Activated CD8-positive, alpha-beta T cell treated with anti-CD3 and anti-CD28 coated beads for 36 hours (primary cell): ENCODE measurements at regions of chr2 and their contacts with region 1.

Region 1: DNA sequence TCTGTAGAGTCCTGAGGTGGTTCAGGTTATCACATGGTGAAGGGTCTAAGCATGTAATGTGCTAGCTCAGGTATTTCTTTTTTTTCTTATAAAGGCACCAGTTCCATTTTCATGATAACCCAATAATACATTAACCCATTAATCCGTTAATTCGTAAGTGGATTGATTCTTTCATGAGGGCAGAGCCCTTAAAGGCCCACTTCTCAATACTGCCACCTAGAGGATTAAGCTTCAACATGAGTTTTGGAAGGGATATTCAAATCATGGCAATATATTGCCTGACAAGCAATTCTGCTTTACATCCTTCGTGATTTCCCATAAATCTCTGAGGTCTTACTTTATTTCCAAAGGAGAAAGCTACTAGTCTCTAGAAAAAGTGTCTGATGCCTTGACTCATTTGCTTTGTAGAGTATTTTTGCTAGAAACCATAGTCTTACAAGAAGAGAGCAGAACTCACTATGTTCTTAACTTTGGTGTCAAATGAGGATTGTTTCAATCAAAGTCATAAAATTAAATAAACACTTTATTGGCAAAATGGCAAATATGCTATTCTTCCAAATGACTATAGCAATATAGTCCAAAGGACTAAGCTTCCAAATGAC is 271.3 kb downstream of the KCNS3 start:
- DNase-seq: no peak
- ATAC-seq: no peak
- H3K4me3 Mint-ChIP-seq: no peak overlapping the region
- H3K27ac Mint-ChIP-seq: no peak overlapping the region
- H3K4me1 Mint-ChIP-seq: no peaks in the 10 kb centered on the region
- H3K27me3 Mint-ChIP-seq: peaks cover 6% of the 10 kb centered on the region
- CTCF ChIP-seq: peak; percentile 69

Region 2: DNA sequence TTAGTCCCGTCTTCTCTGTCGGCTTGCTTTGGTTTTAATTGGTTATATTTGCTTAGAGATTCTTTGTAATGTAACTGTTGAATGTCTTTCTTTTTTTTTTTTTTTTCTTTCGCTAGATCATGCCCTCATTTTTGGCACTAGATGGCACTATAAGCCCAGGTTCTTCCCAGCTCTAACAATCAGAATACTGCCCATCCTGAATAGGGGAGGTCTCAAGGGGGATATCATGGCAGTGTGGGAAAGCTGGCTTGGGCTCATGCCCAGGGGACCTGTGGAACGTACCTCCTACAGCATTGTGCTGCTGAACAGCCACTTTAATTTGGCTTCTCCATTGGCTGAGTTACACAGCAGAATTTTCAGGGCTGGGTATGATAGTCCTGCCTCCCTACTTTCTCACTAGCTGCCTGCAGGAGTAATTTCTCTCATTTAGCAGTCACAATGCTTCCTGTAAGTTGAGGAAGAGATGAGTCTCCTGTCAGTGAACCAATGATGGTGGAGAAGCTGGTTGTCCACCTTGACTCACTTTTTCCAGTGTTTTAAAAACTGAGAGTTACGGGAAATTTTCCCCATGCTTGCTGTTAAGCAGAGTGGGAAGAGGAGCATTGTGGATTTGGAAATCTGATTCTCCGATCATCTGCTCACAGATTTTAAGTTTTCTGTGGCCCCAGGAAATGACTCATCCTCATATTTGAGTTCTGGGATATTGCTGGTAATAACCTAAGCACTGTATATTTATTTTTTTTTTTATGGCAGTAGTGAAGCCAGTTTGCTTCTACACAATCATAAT is 678.7 kb before region 1 on chr2:
- CTCF ChIA-PET with region 1: no interaction called
- POLR2A ChIA-PET with region 1: no interaction called
- intact Hi-C with region 1: no loop called
- DNase-seq: peak; percentile 1
- ATAC-seq: no peak
- H3K4me3 Mint-ChIP-seq: no peak overlapping the region
- H3K27ac Mint-ChIP-seq: no peak overlapping the region
- H3K4me1 Mint-ChIP-seq: no peaks in the 10 kb centered on the region
- H3K27me3 Mint-ChIP-seq: no peaks in the 10 kb centered on the region
- CTCF ChIP-seq: no peak

Region 3: DNA sequence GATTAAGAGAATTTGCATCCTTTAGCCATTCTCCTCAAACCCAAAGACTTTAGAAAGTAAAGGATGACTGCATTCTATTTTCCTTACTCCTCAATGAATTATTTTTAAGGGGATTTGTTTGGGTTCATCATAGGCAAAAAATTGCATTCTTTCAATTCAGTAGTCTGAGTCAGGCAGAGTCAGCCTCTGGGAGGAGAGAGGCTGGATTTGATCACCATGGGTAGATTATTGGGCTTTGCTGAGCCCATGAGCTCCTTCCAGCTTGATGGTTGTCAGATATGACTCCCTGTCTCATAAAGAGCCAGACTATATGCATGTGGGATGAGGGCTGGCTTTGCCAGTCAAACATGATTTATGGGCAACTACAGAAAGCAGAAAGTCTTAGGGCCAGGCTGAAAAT is 170.0 kb before region 1 on chr2:
- CTCF ChIA-PET with region 1: no interaction called
- POLR2A ChIA-PET with region 1: no interaction called
- intact Hi-C with region 1: no loop called
- DNase-seq: no peak
- ATAC-seq: no peak
- H3K4me3 Mint-ChIP-seq: no peak overlapping the region
- H3K27ac Mint-ChIP-seq: no peak overlapping the region
- H3K4me1 Mint-ChIP-seq: no peaks in the 10 kb centered on the region
- H3K27me3 Mint-ChIP-seq: no peaks in the 10 kb centered on the region
- CTCF ChIP-seq: no peak

Region 4: DNA sequence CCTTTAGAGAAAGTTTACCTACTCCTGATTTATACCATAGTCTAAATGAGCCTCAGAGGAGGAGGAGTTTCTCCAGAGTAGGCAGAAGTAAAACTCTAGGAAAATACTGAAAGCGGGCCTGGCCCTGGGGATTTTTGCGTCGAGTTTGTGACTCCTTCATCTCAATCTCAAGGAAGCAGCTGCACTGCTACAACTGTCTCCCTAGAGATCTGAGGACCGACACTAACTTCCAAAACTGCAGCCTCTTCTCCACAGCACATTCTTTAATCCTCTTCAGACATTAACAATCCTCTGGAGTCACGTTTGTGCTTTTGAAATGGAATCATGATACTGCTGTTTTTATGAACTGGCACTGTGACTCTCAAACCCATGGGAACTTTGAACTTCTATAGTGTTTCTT is 10.2 kb after region 1 on chr2:
- CTCF ChIA-PET with region 1: interaction called, 11 read pairs
- POLR2A ChIA-PET with region 1: no interaction called
- intact Hi-C with region 1: no loop called
- DNase-seq: no peak
- ATAC-seq: no peak
- H3K4me3 Mint-ChIP-seq: no peak overlapping the region
- H3K27ac Mint-ChIP-seq: no peak overlapping the region
- H3K4me1 Mint-ChIP-seq: no peaks in the 10 kb centered on the region
- H3K27me3 Mint-ChIP-seq: peaks cover 3% of the 10 kb centered on the region
- CTCF ChIP-seq: no peak